A549 (cell line): ENCODE measurements at regions of chr13 and their contacts with region 1.

Region 1: GRCh38 chr13:110245416-110245899 is 61.5 kb downstream of the COL4A1 start:
- DNase-seq: no peak
- ATAC-seq: no peak
- H3K4me3 ChIP-seq: no peak overlapping the region
- H3K27ac ChIP-seq: no peak overlapping the region
- H3K4me1 ChIP-seq: peaks cover 11% of the 10 kb centered on the region
- CTCF ChIP-seq: no peak
- EP300 ChIP-seq: no peak
- POLR2A ChIP-seq: no peak
- RAD21 ChIP-seq: no peak

Region 2: DNA sequence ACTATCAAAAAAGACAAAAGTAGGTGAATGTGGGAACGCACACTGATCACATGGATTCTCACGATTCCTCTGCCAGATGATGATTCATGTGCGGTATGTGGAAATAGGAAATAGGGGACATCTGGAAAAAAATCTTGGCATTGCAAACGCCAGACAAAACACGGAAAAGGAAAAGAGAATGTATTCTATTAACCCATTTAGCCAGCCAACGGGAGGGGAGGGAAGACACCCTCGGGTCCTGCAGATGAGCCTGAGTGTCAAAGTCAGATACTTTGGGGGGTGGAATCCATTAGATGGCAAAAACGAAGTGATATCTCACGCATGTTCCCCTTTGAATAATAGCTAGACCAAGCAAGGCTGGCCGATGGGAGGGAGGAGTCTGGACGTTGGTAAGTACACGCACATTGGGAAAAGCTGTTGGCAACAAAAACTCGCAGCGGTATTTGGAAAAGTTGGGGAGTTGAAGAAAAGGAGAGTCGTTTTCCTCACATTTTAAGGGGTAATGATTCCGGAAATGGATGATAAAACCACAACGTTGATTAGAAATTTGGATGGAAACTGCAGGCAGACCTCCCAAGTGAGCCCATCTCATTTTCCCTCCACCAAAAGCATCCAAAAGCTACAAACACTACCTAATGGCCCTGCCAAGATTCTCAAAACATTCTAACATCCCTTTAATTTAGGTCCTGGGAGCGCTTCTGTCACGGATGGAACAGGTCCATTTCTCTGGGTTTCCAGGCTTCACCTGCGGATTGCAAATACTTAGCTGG is 12.1 kb before region 1 on chr13:
- CTCF ChIA-PET with region 1: interaction called, 10 read pairs
- POLR2A ChIA-PET with region 1: no interaction called
- DNase-seq: no peak
- ATAC-seq: no peak
- H3K4me3 ChIP-seq: no peak overlapping the region
- H3K27ac ChIP-seq: no peak overlapping the region
- H3K4me1 ChIP-seq: peaks cover 5% of the 10 kb centered on the region; the same call in 1 of the 3 replicates
- CTCF ChIP-seq: no peak
- EP300 ChIP-seq: no peak
- POLR2A ChIP-seq: no peak
- RAD21 ChIP-seq: no peak